Right ventricle myocardium inferior (tissue), 1 donor: ENCODE measurements at regions of chr1 and their contacts with region 1.

Region 1: DNA sequence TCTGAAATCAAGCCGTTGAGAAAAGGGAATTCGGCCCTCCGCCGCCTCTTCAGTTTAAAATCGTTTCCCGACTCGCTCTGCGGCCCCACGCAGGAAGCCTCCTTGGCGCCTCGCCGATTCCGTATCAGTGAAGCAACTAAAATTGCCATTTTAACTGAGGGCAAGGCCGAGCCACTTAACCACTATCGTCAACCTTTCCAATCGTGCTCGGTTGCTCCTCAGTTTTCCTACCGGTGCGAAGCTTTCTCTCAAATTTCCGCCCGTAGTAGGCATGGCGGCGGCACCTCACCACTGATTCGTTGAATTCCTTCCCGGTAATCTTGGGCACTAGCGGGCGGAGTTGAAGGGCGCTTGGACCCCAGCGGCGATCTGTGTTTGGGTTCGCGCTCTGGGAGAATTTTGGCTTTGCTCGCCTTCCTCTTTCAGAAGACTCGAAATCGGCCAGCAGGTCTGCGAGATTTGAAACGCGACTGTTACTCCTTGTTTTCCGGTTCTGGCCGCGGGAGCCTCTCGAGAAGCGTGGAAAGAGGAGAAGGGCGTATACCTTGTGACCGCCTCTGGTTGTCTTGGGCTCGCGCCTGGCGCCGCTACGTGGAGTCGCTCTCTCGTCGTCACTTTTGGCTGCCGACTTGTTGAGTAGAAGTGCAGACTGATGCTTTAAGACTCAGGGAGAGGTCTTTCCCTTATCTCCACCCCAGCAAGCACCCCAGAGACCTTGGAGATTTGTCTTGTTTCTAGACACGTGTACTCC is at the starts of genes CENPL and DARS2:
- DNase-seq: peak; percentile 98
- ATAC-seq: peak; percentile 99
- total RNA-seq, gene CENPL: 3.3 TPM
- total RNA-seq, gene DARS2: 13.5 TPM

Region 2: DNA sequence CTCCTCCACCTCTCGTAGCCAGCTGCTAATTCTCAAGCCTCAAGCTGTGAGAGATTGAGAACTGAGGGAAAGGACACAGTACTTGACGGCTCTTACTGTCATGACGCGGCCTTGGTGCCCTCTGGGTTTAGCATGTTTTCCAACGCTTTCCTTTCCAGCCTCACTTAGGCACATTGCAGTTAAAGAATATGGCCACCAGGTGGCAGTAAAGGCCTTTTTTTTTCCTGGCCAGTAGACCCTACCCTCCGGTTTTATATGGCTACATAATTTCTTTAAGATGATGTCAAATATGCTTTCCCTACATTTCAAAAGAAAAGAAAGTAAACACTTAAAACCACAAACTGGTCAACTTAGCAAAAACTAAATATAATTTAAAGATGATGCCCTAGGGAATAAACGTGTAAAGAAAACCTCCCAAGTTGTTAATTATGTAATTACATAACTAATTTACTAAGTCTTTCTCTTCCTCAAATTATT is 404.1 kb before region 1 on chr1:
- intact Hi-C with region 1: loop called (anchors 2 kb)
- DNase-seq: no peak
- ATAC-seq: peak; percentile 86

Region 3: DNA sequence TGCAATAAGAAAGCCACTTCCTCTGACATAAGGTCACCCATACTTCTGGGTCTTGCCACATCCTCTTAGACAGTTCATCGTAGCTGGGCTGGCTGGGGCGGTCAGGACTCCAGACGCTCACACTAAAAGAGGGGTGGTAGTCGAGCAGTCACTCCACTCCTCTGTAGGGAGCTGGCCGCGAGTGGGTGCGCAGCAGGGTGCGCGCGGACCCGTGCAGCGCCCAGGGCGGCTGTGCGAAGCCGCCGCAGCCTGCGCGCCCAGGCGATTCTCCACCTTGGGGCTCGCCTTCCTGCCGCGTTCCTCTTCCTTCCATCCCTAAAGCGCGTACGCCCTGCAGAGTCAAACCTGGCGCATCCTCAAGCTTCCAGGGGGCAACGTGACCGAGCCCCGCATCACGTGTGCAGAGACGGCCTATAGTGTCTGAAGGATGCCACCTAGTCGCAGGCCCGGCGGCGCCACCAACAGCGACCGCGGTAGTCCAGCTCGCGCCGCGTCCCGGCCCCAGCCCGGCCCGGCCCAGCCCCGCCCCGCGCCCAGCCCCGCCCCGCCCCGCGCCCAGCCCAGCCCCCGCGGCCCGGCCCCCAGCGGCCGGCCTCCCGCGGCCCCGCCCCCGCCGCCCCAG is 347.7 kb before region 1 on chr1:
- intact Hi-C with region 1: loop called (anchors 1 kb)
- DNase-seq: peak; percentile 97
- ATAC-seq: peak; percentile 93

Region 4: GRCh38 chr1:173682176-173682575 is 142.3 kb before region 1 on chr1:
- intact Hi-C with region 1: no loop called
- DNase-seq: no peak
- ATAC-seq: no peak